ENCODE measurements at regions of chr1 and their contacts with region 1.

Region 1: DNA sequence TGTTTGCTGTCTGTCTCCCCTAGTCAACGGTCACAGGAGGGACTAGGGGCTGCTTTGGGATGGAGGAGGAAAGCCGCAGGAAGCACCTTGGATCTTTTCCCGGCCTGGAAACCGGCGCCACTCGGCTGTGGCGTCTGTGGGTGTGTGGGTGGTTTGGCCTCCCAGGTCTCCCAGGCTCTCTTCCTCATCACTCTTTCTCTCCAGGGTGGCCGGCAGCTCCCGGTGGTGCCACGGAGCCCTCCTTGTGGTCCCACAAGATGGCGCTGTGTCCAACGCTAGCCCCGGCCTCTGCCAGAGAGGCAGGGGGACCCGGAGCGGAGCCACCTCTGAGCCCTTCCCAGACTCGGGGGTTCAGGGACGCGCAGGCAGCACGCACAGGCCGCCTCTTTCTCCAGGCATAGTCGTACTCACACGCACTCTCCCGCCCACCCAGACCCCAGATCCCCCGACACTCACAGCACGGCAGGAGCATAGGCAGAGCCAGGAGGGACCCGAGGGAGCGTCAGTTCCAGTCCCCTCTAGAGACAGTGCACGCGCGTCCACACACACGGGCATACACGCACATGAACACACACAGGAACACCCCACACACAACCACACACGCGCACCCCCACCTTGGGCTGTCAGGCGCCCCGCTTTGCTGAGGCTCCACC is 31.2 kb downstream of the CDCP2 start:
- DNase-seq: peak; percentile 79 to 83
- ATAC-seq: peak; percentile 85 to 94 (median 90)
- H3K4me3 ChIP-seq: peak overlapping the region in 8 of 10 donors; percentile 1 to 41 (median 34)
- H3K27ac ChIP-seq: no peak overlapping the region
- H3K4me1 ChIP-seq: peaks cover 0 to 15% (median 10%) of the 10 kb centered on the region in 9 donors
- H3K27me3 ChIP-seq: peaks cover 0 to 13% (median 0%) of the 10 kb centered on the region in 7 donors
- CTCF ChIP-seq: peak; percentile 66 to 89 (median 82)

Region 2: GRCh38 chr1:53526451-53527101 is 595.0 kb before region 1 on chr1:
- intact Hi-C with region 1: no loop called
- DNase-seq: peak; percentile 49 to 55
- ATAC-seq: peak; percentile 44 to 79 (median 74)
- H3K4me3 ChIP-seq: no peak overlapping the region
- H3K27ac ChIP-seq: no peak overlapping the region
- H3K4me1 ChIP-seq: peaks cover 0 to 38% (median 12%) of the 10 kb centered on the region in 9 donors
- H3K27me3 ChIP-seq: peaks cover 0 to 19% (median 4%) of the 10 kb centered on the region in 7 donors
- CTCF ChIP-seq: no peak

Region 3: DNA sequence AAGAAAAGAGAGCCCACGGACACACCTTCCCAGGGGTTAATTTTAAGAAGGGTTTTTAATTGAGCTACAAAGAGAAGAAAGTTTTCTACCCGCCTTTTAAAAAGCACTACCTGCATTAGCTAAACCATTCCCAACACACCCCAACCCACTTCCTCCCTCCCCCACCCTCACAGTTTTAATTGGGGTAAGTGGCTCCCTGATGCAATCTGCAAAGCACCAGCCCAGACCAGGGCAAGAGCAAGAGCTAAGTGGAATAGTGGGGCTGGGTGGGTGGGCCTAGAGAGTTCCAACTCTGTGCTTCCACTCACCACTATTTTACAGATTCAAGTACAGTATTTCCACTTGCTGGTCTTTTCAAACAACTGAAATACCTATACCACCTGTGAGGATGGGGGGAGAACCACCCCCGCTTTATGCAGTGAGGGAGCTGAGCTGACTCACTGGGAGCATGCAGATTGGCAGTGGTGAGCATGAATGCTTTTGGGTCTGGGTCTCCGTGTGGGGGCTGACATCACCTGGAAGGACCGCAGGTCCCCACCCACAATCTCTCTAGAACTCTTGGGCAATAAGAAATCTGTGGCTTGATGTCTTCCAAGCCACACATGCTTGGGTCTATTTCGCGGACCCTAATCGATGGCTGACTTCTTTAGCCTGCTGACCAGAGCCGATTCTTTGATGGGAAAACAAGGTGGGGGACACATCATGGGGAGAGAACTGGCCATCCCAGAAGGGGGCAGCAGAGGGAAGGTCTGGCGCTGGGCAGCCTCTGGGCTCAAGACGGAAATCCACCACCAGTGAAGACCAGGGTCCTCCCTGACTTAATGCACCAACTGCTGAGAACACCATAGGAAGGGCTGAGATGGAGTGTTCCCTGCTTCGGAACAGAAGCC is 189.1 kb after region 1 on chr1:
- intact Hi-C with region 1: loop called in 1 of 10 experiments (anchors 10 kb)
- DNase-seq: peak; percentile 57 to 68
- ATAC-seq: peak in 6 of 8 donors; percentile 22 to 52 (median 43)
- H3K4me3 ChIP-seq: no peak overlapping the region
- H3K27ac ChIP-seq: peak overlapping the region in 6 of 10 donors; percentile 19 to 88 (median 74)
- H3K4me1 ChIP-seq: peaks cover 14 to 92% (median 83%) of the 10 kb centered on the region in 9 donors
- H3K27me3 ChIP-seq: no peaks in the 10 kb centered on the region
- CTCF ChIP-seq: peak; percentile 16 to 71 (median 67)

Region 4: GRCh38 chr1:54361342-54361741 is 239.7 kb after region 1 on chr1:
- intact Hi-C with region 1: loop called in 1 of 10 experiments (anchors 10 kb)
- DNase-seq: no peak
- ATAC-seq: no peak
- H3K4me3 ChIP-seq: no peak overlapping the region
- H3K27ac ChIP-seq: peak overlapping the region in 1 of 10 donors; percentile 87
- H3K4me1 ChIP-seq: peaks cover 8 to 91% (median 61%) of the 10 kb centered on the region in 9 donors
- H3K27me3 ChIP-seq: no peaks in the 10 kb centered on the region
- CTCF ChIP-seq: peak in 5 of 9 donors; percentile 15 to 52 (median 32)

Region 5: GRCh38 chr1:54413295-54413694 is 291.7 kb after region 1 on chr1:
- intact Hi-C with region 1: loop called in 8 of 10 experiments (anchors 5 to 10 kb)
- DNase-seq: peak; percentile 36 to 68
- ATAC-seq: peak; percentile 56 to 91 (median 85)
- H3K4me3 ChIP-seq: peak overlapping the region in 2 of 10 donors; percentile 2 to 6
- H3K27ac ChIP-seq: peak overlapping the region in 9 of 10 donors; percentile 2 to 67 (median 31)
- H3K4me1 ChIP-seq: peaks cover 0 to 27% (median 22%) of the 10 kb centered on the region in 9 donors
- H3K27me3 ChIP-seq: no peaks in the 10 kb centered on the region
- CTCF ChIP-seq: no peak

Region 6: GRCh38 chr1:54421101-54421504 is 299.5 kb after region 1 on chr1:
- intact Hi-C with region 1: loop called in 1 of 10 experiments (anchors 5 kb)
- DNase-seq: no peak
- ATAC-seq: no peak
- H3K4me3 ChIP-seq: no peak overlapping the region
- H3K27ac ChIP-seq: no peak overlapping the region
- H3K4me1 ChIP-seq: no peaks in the 10 kb centered on the region
- H3K27me3 ChIP-seq: no peaks in the 10 kb centered on the region
- CTCF ChIP-seq: no peak

Measured in heart right ventricle (tissue), 16 donors.